Sigmoid colon (tissue), 7 donors: ENCODE measurements at regions of chr17 and their contacts with region 1.

Region 1: DNA sequence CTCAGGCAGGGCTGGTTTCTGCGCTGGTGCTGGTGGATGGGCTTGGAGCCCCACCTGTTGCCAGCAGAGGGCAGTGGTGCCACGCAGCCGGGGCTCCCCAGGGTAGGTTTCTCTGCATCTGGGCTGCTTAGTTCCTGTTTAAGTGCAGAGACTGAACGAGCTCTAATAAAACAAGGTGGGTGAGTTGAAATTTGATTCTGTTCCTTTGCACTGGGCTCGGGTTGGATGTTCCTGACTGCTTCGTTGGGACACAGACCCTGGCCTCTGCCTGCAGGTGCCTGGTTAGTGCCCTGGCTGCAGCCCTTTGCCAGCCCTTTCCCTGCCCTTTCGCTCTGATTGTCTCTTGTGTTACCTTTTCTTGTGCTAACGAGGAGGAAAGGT is 30.0 kb downstream of the TBCD start:
- DNase-seq: peak; percentile 88
- H3K4me3 ChIP-seq: no peak overlapping the region
- H3K27ac ChIP-seq: peak overlapping the region in 1 of 4 donors; percentile 4
- H3K4me1 ChIP-seq: peaks cover 0 to 4% (median 0%) of the 10 kb centered on the region in 4 donors
- H3K27me3 ChIP-seq: no peaks in the 10 kb centered on the region
- CTCF ChIP-seq: peak; percentile 85 to 93 (median 92)
- EP300 ChIP-seq: no peak
- POLR2A ChIP-seq: no peak

Region 2: GRCh38 chr17:82494236-82495055 is 287.4 kb before region 1 on chr17:
- intact Hi-C with region 1: no loop called
- DNase-seq: peak; percentile 94
- H3K4me3 ChIP-seq: no peak overlapping the region
- H3K27ac ChIP-seq: peak overlapping the region; percentile 60 to 97 (median 94)
- H3K4me1 ChIP-seq: peaks cover 0 to 41% (median 29%) of the 10 kb centered on the region in 4 donors
- H3K27me3 ChIP-seq: no peaks in the 10 kb centered on the region
- CTCF ChIP-seq: peak; percentile 76 to 95 (median 88)
- EP300 ChIP-seq: no peak
- POLR2A ChIP-seq: no peak

Region 3: GRCh38 chr17:82548681-82549303 is 233.1 kb before region 1 on chr17:
- intact Hi-C with region 1: no loop called
- DNase-seq: peak; percentile 76
- H3K4me3 ChIP-seq: no peak overlapping the region
- H3K27ac ChIP-seq: peak overlapping the region in 3 of 4 donors; percentile 58 to 97 (median 62)
- H3K4me1 ChIP-seq: peaks cover 0 to 94% (median 81%) of the 10 kb centered on the region in 4 donors
- H3K27me3 ChIP-seq: no peaks in the 10 kb centered on the region
- CTCF ChIP-seq: no peak
- EP300 ChIP-seq: peak in 1 of 4 donors; percentile 64
- POLR2A ChIP-seq: no peak

Region 4: GRCh38 chr17:82876602-82877379 is 94.9 kb after region 1 on chr17:
- intact Hi-C with region 1: loop called (anchors 2 kb)
- DNase-seq: peak; percentile 96
- H3K4me3 ChIP-seq: no peak overlapping the region
- H3K27ac ChIP-seq: peak overlapping the region; percentile 75 to 82 (median 78)
- H3K4me1 ChIP-seq: peaks cover 0 to 43% (median 35%) of the 10 kb centered on the region in 4 donors
- H3K27me3 ChIP-seq: no peaks in the 10 kb centered on the region
- CTCF ChIP-seq: peak; percentile 36 to 49 (median 38)
- EP300 ChIP-seq: no peak
- POLR2A ChIP-seq: no peak

Region 5: DNA sequence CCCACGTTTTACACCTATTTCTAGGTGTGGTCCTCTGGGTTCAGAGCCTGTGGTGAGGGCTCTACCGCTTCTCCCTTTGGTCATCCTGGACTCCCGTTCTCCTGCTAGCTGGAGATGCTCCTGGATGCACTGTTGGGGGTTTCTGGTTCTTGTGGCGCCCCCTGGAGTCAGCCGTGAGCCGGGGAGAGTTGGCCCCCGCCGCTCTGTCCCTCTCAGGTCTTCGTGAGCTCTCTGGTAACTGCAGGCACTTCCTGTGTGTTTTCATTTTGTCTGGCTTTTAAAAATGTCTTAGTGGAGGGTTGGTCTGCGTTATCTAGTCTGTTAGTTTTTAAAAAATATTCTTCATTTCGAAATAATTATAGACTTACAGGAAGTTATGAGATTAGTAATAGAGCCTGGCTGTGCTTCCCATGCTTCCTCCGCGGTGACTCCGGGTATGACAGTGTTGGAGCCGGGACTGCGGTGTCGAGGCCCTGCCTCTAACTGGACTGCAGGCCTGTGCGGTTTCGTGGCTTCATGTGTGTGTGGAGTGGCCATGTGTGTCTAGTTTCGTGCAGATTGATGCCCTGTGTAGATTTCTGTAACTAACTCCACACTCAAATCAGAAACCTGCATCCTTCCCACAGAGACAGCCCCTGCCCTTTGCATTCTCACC is 135.9 kb after region 1 on chr17:
- intact Hi-C with region 1: loop called (anchors 5 kb)
- DNase-seq: no peak
- H3K4me3 ChIP-seq: no peak overlapping the region
- H3K27ac ChIP-seq: no peak overlapping the region
- H3K4me1 ChIP-seq: no peaks in the 10 kb centered on the region
- H3K27me3 ChIP-seq: no peaks in the 10 kb centered on the region
- CTCF ChIP-seq: peak in 2 of 4 experiments; percentile 17 to 20
- EP300 ChIP-seq: no peak
- POLR2A ChIP-seq: no peak